ENCODE measurements at regions of chr1 and their contacts with region 1.

Region 1: GRCh38 chr1:151032164-151032563 is 4.2 kb upstream of the BNIPL start:
- DNase-seq: no peak
- ATAC-seq: no peak
- H3K4me3 ChIP-seq: no peak overlapping the region
- H3K27ac ChIP-seq: no peak overlapping the region
- H3K4me1 ChIP-seq: peaks cover 0 to 12% (median 5%) of the 10 kb centered on the region in 9 donors
- H3K27me3 ChIP-seq: no peaks in the 10 kb centered on the region
- CTCF ChIP-seq: no peak

Region 2: DNA sequence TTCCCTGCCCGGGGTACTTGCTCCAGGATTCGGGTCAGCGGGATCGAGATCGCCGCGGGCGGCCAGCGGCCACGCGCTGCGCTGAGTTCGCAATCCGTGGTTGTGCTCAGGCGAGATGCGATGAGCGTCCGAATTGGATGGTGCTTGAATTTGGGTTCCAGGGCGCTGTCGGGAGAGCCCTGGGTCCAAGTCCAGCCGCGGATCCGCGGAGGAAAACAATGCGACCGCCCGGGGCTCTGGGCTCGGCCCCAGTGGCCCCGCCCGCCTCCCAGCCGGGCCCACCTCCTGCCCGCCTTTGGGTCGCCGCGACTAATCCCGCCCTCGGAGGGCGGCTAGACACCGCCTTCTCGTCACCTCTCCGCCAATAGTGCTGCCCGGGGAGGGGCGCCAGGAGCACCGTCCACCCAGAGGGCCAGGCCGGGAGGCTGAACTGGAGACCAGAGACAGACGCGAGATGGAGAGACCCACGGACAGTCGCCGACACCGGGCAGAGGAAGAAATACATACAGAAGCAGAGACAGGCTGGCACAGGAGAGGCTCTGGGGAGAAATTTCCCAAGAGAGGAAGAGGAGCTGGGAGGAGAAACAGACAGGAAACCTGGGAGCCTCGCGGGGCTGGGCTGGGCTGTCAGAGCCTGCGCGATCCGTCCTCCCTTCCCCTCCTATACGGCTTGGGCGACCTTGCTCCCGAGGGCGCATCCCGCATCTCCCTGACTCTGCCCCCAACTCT is 114.4 kb after region 1 on chr1 and contains the start of gene SEMA6C:
- intact Hi-C with region 1: loop called in 2 of 10 experiments (anchors 5 to 10 kb)
- DNase-seq: peak; percentile 96 to 97
- ATAC-seq: peak; percentile 92 to 95 (median 94)
- H3K4me3 ChIP-seq: peak within 1 kb of the TSS; percentile 83 to 100 (median 94)
- H3K27ac ChIP-seq: peak within 1 kb of the TSS; percentile 82 to 96 (median 89)
- H3K4me1 ChIP-seq: peaks cover 21 to 58% (median 46%) of the 10 kb centered on the region in 9 donors
- H3K27me3 ChIP-seq: peaks cover 0 to 15% (median 0%) of the 10 kb centered on the region in 7 donors
- CTCF ChIP-seq: no peak
- total RNA-seq, gene SEMA6C: 23.2 to 68.1 (median 54.9) TPM

Region 3: GRCh38 chr1:151756291-151756690 is 724.1 kb after region 1 on chr1:
- intact Hi-C with region 1: no loop called
- DNase-seq: no peak
- ATAC-seq: no peak
- H3K4me3 ChIP-seq: no peak overlapping the region
- H3K27ac ChIP-seq: no peak overlapping the region
- H3K4me1 ChIP-seq: no peaks in the 10 kb centered on the region
- H3K27me3 ChIP-seq: no peaks in the 10 kb centered on the region
- CTCF ChIP-seq: no peak

Measured in heart right ventricle (tissue), 16 donors.